Dorsolateral prefrontal cortex (tissue), 120 donors: ENCODE measurements at regions of chr15 and their contacts with region 1.

Region 1: GRCh38 chr15:34209421-34210282 is at the start of gene KATNBL1:
- DNase-seq: peak; percentile 91 to 97 (median 94)
- H3K4me3 ChIP-seq: peak within 1 kb of the TSS; percentile 47 to 85 (median 73)
- H3K27ac ChIP-seq: peak within 1 kb of the TSS in 39 of 59 donors; percentile 2 to 81 (median 60)
- H3K27me3 ChIP-seq: no peaks in the 10 kb centered on the region
- CTCF ChIP-seq: peak; percentile 87 to 99 (median 97)
- total RNA-seq, gene KATNBL1: 37.3 to 94.1 (median 63.6) TPM

Region 2: GRCh38 chr15:34055853-34056595 is 153.6 kb before region 1 on chr15:
- intact Hi-C with region 1: loop called (anchors 1 to 2 kb)
- DNase-seq: no peak
- H3K4me3 ChIP-seq: no peak overlapping the region
- H3K27ac ChIP-seq: no peak overlapping the region
- H3K27me3 ChIP-seq: no peaks in the 10 kb centered on the region
- CTCF ChIP-seq: no peak

Region 3: DNA sequence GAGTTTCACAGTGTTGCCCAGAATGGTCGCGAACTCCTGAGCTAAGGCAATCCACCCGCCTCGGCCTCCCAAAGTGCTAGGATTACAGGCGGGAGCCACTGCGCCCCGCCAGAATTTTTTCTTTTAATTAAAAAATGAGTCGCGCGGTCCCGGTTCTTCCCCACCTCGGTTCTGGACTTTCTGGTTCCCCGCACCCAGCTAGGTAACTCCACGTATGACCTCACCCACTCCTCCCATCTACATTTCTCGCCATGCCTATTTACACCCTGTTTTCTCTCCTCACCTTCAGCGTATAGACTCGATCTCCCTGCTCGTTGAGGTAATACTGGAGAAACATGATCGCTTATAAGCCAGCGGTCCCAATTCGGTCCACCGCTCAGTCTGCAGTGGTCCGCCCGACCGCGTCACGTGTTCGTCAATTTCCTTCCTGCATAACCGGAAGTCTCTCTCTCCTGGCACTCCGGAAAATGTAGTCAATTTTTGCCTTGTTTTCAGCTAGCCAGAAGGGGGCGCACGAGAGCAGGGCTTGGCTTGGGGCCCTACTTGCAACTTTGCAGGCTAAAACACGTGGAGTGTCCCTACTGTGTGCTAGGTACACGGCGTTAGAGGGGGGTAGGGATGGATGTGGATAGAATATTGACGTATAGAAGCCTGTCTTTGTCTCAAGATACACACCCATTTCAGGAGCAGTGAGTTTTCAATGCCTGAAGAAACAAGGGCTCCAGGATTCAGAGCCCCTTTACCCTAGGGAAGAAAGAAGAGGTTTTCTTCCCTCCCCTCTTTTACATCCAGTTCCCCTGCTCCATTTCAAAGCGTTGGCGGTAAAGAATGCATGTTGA is 133.3 kb after region 1 on chr15 and contains the starts of genes NOP10 and NUTM1:
- intact Hi-C with region 1: loop called in 1 of 2 experiments (anchors 5 kb)
- DNase-seq: peak; percentile 82 to 93 (median 91)
- H3K4me3 ChIP-seq: peak within 1 kb of the TSS; percentile 61 to 98 (median 83)
- H3K27ac ChIP-seq: peak within 1 kb of the TSS in 58 of 59 donors; percentile 46 to 95 (median 84)
- H3K27me3 ChIP-seq: no peaks in the 10 kb centered on the region
- CTCF ChIP-seq: peak; percentile 86 to 99 (median 95)
- total RNA-seq, gene NOP10: 27.3 to 73.6 (median 47.5) TPM
- total RNA-seq, gene NUTM1: not detected